Panc1 (cell line): ENCODE measurements at regions of chr4 and their contacts with region 1.

Region 1: DNA sequence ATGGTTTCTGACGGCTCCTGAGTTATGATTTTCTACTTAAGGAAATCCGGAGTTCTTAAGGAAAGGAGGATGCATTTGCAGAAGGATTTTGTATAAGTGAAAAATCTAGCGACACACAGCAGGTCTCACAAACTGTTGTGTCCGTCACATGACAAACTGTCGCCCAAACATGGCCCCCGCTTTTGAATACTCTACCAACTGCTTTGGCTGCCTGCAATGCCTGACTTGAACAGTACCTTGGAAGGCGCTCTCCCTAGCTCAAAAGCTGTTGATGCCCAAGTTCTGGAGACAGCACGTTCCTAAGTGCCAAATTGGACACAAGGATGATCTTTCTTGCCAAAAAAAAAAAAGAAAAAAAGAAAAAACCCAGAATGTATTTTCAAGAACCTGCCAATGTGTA is 103.2 kb downstream of the ENPP6 start:
- DNase-seq: no peak
- ATAC-seq: no peak
- H3K4me3 ChIP-seq: no peak overlapping the region
- H3K27ac ChIP-seq: no peak overlapping the region
- H3K4me1 ChIP-seq: no peaks in the 10 kb centered on the region
- H3K27me3 ChIP-seq: no peaks in the 10 kb centered on the region
- CTCF ChIP-seq: no peak; the same call in 1 of the 2 replicates

Region 2: GRCh38 chr4:183936047-183936446 is 178.4 kb before region 1 on chr4:
- CTCF ChIA-PET with region 1: no interaction called
- POLR2A ChIA-PET with region 1: no interaction called
- in situ Hi-C with region 1: no loop called
- intact Hi-C with region 1: no loop called
- DNase-seq: no peak
- ATAC-seq: no peak
- H3K4me3 ChIP-seq: no peak overlapping the region
- H3K27ac ChIP-seq: no peak overlapping the region
- H3K4me1 ChIP-seq: no peaks in the 10 kb centered on the region
- H3K27me3 ChIP-seq: no peaks in the 10 kb centered on the region
- CTCF ChIP-seq: no peak

Region 3: DNA sequence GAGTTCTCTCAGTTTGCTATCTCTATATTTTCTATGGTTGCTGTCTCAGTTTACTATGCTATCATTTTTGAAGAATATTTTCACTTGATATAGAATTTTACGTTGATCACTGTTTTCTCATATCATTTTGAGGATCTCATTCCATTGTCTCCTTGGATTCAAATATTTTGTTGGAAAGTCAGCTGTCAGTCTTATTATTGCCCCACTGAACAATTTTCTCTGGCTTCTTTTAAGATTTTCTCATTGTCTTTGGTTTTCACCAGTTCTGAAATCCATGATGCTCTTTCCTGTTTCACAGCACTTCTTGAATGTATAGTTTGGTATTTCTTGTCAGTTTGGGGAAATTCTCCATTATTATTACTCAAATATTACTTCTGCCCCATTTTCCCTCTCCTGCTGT is 22.1 kb after region 1 on chr4:
- CTCF ChIA-PET with region 1: no interaction called
- POLR2A ChIA-PET with region 1: interaction called, 14 read pairs
- in situ Hi-C with region 1: no loop called
- intact Hi-C with region 1: no loop called
- DNase-seq: no peak
- ATAC-seq: no peak
- H3K4me3 ChIP-seq: no peak overlapping the region
- H3K27ac ChIP-seq: no peak overlapping the region
- H3K4me1 ChIP-seq: no peaks in the 10 kb centered on the region
- H3K27me3 ChIP-seq: no peaks in the 10 kb centered on the region
- CTCF ChIP-seq: no peak